ENCODE measurements at regions of chr5 and their contacts with region 1.

Region 1: GRCh38 chr5:14664302-14665100 is at the start of gene OTULIN:
- DNase-seq: peak; percentile 86
- H3K4me3 Mint-ChIP-seq: peak within 1 kb of the TSS; percentile 98
- H3K27ac Mint-ChIP-seq: peak within 1 kb of the TSS; percentile 98
- H3K4me1 Mint-ChIP-seq: peaks cover 72% of the 10 kb centered on the region
- H3K27me3 Mint-ChIP-seq: no peaks in the 10 kb centered on the region
- total RNA-seq, gene OTULIN: 57.4 and 58.7 TPM in 2 replicates

Region 2: GRCh38 chr5:14415024-14415697 is 249.3 kb before region 1 on chr5:
- intact Hi-C with region 1: loop called (anchors 1 kb)
- DNase-seq: no peak
- H3K4me3 Mint-ChIP-seq: peak overlapping the region; percentile 43
- H3K27ac Mint-ChIP-seq: peak overlapping the region; percentile 90
- H3K4me1 Mint-ChIP-seq: peaks cover 52% of the 10 kb centered on the region
- H3K27me3 Mint-ChIP-seq: peaks cover 7% of the 10 kb centered on the region

Region 3: DNA sequence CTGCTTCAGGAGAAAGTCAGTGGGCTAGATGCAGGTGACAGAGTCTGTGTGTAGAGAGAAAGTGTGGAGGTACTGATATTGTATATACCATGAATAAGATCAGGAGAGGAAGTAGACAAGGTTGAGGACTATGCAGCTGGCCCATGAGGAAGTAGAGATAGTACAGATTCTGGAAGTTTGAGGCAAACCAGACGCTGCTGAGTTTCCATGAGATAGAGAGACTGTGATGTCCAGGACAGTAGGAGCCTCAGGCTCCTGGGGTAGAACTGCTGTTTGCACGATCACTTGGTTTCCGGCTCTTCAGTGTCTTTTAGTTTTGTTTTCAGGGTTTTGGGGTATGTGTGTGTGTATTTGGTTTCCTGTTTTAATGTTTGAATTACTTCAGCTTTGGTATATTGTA is 69.3 kb before region 1 on chr5:
- intact Hi-C with region 1: loop called (anchors 2 kb)
- DNase-seq: peak; percentile 49
- H3K4me3 Mint-ChIP-seq: peak overlapping the region; percentile 78
- H3K27ac Mint-ChIP-seq: peak overlapping the region; percentile 98
- H3K4me1 Mint-ChIP-seq: peaks cover 76% of the 10 kb centered on the region
- H3K27me3 Mint-ChIP-seq: no peaks in the 10 kb centered on the region

Region 4: DNA sequence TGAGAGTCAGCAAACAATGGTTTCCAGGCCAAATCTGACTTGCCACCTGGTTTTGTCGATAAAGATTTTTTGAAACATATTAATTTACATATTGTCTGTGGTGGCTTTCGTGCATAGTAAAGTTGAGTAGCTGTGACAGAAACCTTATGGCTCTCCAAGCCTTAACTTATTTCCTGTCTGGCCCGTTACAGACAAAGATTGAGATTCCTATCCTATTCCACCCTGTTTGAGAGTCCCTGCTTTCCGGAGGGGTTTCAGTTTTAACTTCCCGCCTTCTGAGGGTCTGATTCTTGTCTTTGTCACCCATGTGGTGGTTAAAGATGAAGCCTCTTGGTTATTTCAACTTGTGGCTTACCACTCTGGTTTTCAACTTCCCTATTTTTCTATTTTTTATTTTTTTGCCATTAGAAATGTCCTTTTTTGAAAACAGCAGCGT is 11.4 kb after region 1 on chr5:
- intact Hi-C with region 1: loop called (anchors 1 kb)
- DNase-seq: no peak
- H3K4me3 Mint-ChIP-seq: peak overlapping the region; percentile 46
- H3K27ac Mint-ChIP-seq: peak overlapping the region; percentile 82
- H3K4me1 Mint-ChIP-seq: peaks cover 69% of the 10 kb centered on the region
- H3K27me3 Mint-ChIP-seq: no peaks in the 10 kb centered on the region

Region 5: DNA sequence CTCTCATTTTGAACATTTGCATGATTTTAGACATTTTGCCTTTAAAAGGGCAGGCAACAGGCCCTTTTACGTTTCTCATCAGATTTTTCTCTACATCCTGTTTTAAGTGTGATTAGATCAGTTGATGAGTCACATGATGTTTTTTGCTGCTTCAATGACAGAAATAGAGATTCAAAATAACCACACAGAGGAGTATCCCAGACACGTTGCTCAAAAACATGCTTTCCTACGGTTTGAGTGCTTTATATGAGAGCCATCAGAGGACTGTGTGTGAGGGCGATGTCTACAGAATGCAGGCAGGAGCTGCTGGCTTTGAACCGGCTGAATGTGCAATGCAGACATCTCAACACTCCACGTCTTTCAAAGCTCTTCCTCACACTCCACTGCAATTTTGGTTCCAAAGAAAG is 42.1 kb after region 1 on chr5:
- intact Hi-C with region 1: loop called (anchors 1 kb)
- DNase-seq: peak; percentile 48
- H3K4me3 Mint-ChIP-seq: peak overlapping the region; percentile 87
- H3K27ac Mint-ChIP-seq: peak overlapping the region; percentile 99
- H3K4me1 Mint-ChIP-seq: peaks cover 75% of the 10 kb centered on the region
- H3K27me3 Mint-ChIP-seq: no peaks in the 10 kb centered on the region

Region 6: DNA sequence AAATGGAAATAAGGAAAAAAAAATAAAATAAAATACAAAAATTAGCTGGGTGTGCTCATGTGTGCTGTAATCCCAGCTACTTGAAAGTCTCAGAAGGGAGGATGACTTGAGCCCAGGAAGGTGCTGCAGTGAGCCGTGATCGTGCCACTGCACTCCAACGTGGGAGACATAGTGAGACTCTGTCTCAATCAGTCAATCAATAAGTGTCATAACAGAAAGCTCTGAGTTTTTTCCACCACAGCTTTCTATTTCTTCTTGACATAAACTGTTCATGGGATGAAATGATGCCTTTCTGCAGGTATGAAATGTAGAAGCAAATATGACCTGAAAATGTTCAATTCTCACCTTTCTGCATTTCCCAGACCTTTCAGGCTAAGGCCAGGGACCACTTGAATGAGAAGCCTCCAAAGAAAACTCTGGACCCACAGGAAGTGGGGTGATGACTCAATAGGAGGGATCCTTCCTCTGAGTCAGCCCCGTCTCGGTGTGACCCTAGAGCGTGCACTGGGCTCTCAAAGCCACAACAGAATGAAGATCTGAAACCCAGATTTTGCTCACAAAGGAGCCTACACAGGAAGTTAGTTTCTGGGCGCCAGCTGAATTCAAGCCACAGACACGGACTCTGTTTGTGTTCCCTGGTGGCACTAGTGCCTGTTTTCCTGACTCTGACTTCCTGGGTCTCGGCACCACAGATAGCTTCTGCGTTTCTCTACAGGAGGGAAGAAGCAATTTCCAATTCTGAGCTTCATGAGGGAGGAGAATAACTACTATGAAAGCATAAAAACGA is 145.1 kb after region 1 on chr5:
- intact Hi-C with region 1: no loop called
- DNase-seq: peak; percentile 74
- H3K4me3 Mint-ChIP-seq: peak overlapping the region; percentile 80
- H3K27ac Mint-ChIP-seq: peak overlapping the region; percentile 88
- H3K4me1 Mint-ChIP-seq: peaks cover 37% of the 10 kb centered on the region
- H3K27me3 Mint-ChIP-seq: no peaks in the 10 kb centered on the region

Region 7: GRCh38 chr5:14925326-14925725 is 260.8 kb after region 1 on chr5:
- intact Hi-C with region 1: loop called (anchors 5 kb)
- DNase-seq: no peak
- H3K4me3 Mint-ChIP-seq: peak overlapping the region; percentile 15
- H3K27ac Mint-ChIP-seq: peak overlapping the region; percentile 78
- H3K4me1 Mint-ChIP-seq: peaks cover 58% of the 10 kb centered on the region
- H3K27me3 Mint-ChIP-seq: peaks cover 2% of the 10 kb centered on the region

Region 8: GRCh38 chr5:16271861-16272260 is 1607.4 kb after region 1 on chr5:
- intact Hi-C with region 1: no loop called
- DNase-seq: no peak
- H3K4me3 Mint-ChIP-seq: no peak overlapping the region
- H3K27ac Mint-ChIP-seq: no peak overlapping the region
- H3K4me1 Mint-ChIP-seq: no peaks in the 10 kb centered on the region
- H3K27me3 Mint-ChIP-seq: no peaks in the 10 kb centered on the region